ENCODE measurements at regions of chr17 and their contacts with region 1.

Region 1: GRCh38 chr17:2336215-2336851 is at the start of gene TSR1:
- DNase-seq: peak; percentile 90
- ATAC-seq: peak; percentile 81
- H3K4me3 ChIP-seq: peak within 1 kb of the TSS; percentile 77 to 87 (median 82)
- H3K4me3 Mint-ChIP-seq: peak within 1 kb of the TSS; percentile 100
- H3K27ac ChIP-seq: peak within 1 kb of the TSS in 1 of 2 donors; percentile 64
- H3K27ac Mint-ChIP-seq: peak within 1 kb of the TSS; percentile 95
- H3K4me1 ChIP-seq: peaks cover 9 to 25% of the 10 kb centered on the region in 2 donors
- H3K4me1 Mint-ChIP-seq: peaks cover 24% of the 10 kb centered on the region
- H3K27me3 ChIP-seq: no peaks in the 10 kb centered on the region
- H3K27me3 Mint-ChIP-seq: no peaks in the 10 kb centered on the region
- CTCF ChIP-seq: no peak
- total RNA-seq, gene TSR1: 29.8 and 31.5 TPM in 2 replicates

Region 2: GRCh38 chr17:2303204-2304188 is 32.8 kb before region 1 on chr17 and contains the starts of genes SMG6 and SRR:
- CTCF ChIA-PET with region 1: interaction called, 4 read pairs
- POLR2A ChIA-PET with region 1: no interaction called
- intact Hi-C with region 1: loop called (anchors 1 kb)
- DNase-seq: peak; percentile 96
- ATAC-seq: peak; percentile 89
- H3K4me3 ChIP-seq: peak within 1 kb of the TSS; percentile 78 to 98 (median 95)
- H3K4me3 Mint-ChIP-seq: peak within 1 kb of the TSS; percentile 91
- H3K27ac ChIP-seq: peak within 1 kb of the TSS; percentile 49 to 85
- H3K27ac Mint-ChIP-seq: peak within 1 kb of the TSS; percentile 85
- H3K4me1 ChIP-seq: peaks cover 6 to 19% of the 10 kb centered on the region in 2 donors
- H3K4me1 Mint-ChIP-seq: peaks cover 11% of the 10 kb centered on the region
- H3K27me3 ChIP-seq: no peaks in the 10 kb centered on the region
- H3K27me3 Mint-ChIP-seq: no peaks in the 10 kb centered on the region
- CTCF ChIP-seq: no peak
- total RNA-seq, gene SMG6: 35.5 and 41.8 TPM in 2 replicates
- total RNA-seq, gene SRR: 5.1 and 10.1 TPM in 2 replicates

Region 3: DNA sequence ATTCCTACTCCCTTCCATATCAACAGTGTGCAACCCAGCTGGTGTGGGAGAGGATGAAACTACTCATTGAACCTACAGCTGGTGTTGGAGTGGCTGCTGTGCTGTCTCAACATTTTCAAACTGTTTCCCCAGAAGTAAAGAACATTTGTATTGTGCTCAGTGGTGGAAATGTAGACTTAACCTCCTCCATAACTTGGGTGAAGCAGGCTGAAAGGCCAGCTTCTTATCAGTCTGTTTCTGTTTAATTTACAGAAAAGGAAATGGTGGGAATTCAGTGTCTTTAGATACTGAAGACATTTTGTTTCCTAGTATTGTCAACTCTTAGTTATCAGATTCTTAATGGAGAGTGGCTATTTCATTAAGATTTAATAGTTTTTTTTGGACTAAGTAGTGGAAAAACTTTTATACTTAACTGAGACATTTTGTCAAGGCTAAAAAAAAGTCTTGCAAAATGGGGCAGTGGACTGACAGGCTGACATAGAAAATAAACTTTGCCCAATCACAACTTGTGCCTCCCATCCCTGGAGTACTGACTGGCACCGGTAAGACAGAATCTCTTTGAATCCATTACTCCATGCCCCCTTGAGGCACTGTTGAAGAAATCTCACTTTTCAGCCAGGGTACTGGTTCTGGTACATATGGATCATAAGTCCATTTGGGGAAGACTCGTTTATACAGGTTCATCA is 12.6 kb before region 1 on chr17:
- CTCF ChIA-PET with region 1: no interaction called
- POLR2A ChIA-PET with region 1: interaction called, 14 read pairs
- intact Hi-C with region 1: no loop called
- DNase-seq: no peak
- ATAC-seq: no peak
- H3K4me3 ChIP-seq: no peak overlapping the region
- H3K4me3 Mint-ChIP-seq: no peak overlapping the region
- H3K27ac ChIP-seq: no peak overlapping the region
- H3K27ac Mint-ChIP-seq: no peak overlapping the region
- H3K4me1 ChIP-seq: no peaks in the 10 kb centered on the region
- H3K4me1 Mint-ChIP-seq: no peaks in the 10 kb centered on the region
- H3K27me3 ChIP-seq: no peaks in the 10 kb centered on the region
- H3K27me3 Mint-ChIP-seq: no peaks in the 10 kb centered on the region
- CTCF ChIP-seq: no peak

Region 4: GRCh38 chr17:2376107-2376506 is 39.8 kb after region 1 on chr17:
- CTCF ChIA-PET with region 1: no interaction called
- POLR2A ChIA-PET with region 1: no interaction called
- intact Hi-C with region 1: no loop called
- DNase-seq: no peak
- ATAC-seq: no peak
- H3K4me3 ChIP-seq: no peak overlapping the region
- H3K4me3 Mint-ChIP-seq: no peak overlapping the region
- H3K27ac ChIP-seq: no peak overlapping the region
- H3K27ac Mint-ChIP-seq: no peak overlapping the region
- H3K4me1 ChIP-seq: no peaks in the 10 kb centered on the region
- H3K4me1 Mint-ChIP-seq: no peaks in the 10 kb centered on the region
- H3K27me3 ChIP-seq: no peaks in the 10 kb centered on the region
- H3K27me3 Mint-ChIP-seq: no peaks in the 10 kb centered on the region
- CTCF ChIP-seq: no peak

Region 5: DNA sequence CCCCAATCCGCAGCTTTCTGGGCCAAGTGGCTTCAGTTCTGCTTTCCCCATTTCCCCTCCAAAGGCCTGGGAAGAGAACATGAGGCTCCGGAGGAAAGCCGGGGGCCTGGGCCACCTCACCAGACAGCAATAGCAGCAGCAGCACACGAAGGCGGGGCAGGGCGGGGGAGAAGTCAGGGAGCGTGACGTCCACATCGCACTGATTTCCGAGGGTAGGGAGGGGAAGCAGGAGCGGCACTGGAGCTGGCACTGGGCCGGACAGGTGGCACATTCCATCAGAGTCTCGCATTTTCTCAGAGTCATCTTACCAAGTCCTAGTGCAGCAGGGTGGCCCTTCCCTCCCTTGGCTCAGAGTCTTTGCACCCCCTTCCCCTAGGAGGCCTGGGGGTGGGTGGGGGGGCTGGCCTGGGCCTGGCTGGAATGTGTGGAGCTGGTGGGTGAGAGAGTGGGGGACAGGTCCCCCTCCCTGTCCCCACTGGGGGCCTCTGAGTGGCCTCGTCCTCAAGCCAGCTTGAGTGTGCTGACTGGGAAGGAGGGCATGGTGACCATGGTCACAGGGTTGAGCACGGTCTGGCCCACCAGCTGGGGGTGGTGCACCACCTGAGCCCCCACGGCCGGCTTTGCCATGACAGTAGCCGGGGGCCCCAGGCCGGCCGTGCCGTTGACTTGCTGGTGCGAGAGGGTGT is 50.2 kb after region 1 on chr17:
- CTCF ChIA-PET with region 1: interaction called, 11 read pairs
- POLR2A ChIA-PET with region 1: no interaction called
- intact Hi-C with region 1: no loop called
- DNase-seq: no peak
- ATAC-seq: no peak
- H3K4me3 ChIP-seq: no peak overlapping the region
- H3K4me3 Mint-ChIP-seq: no peak overlapping the region
- H3K27ac ChIP-seq: no peak overlapping the region
- H3K27ac Mint-ChIP-seq: no peak overlapping the region
- H3K4me1 ChIP-seq: peaks cover 14 to 21% of the 10 kb centered on the region in 2 donors
- H3K4me1 Mint-ChIP-seq: peaks cover 18% of the 10 kb centered on the region
- H3K27me3 ChIP-seq: no peaks in the 10 kb centered on the region
- H3K27me3 Mint-ChIP-seq: no peaks in the 10 kb centered on the region
- CTCF ChIP-seq: no peak

Region 6: DNA sequence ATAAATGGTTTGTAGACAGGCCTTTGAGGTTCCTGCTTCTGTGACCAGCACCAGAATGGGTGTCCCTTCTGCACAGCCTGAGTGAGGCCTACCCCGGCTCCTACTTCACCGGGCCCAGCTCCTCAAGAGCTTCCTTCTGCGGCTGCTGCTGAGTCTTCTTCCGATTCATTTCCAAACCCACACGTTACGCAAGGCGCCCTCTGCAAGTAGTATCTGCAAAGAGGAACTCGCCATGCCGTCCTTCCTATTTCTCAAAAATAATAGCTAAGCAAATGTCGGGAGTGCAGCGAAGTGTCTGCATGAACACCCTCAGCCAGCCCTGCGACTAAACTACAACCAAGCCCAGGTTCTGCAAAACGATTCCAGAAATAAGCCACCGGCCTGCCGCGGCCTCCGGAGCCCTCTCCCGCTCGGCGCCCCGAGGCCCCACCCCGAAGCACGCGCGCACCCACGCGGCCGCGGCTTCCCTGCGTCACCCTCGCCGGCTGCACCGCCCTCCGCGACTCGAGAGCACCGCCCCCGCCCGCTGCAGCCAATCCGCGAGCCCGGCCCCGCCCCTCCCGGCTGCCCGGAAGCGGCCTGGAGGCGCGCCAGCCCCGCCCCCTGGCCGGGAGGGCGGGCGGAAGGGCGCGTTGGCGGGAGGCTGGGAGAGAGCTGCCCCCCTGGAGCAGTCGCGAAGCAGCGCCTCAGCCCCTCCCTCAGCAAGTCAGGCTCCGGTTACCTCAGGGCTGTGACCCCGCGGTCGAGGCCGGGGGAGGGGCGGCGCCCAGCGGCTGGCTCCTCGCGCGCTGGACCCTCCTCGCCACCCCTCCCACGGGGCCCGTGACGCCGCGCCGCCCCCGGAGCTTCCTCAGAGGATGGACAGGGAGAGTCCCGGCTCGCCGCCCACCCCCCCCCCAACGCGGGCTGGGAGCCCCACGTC is 56.2 kb after region 1 on chr17:
- CTCF ChIA-PET with region 1: interaction called, 3 read pairs
- POLR2A ChIA-PET with region 1: interaction called, 6 read pairs
- intact Hi-C with region 1: loop called (anchors 2 kb)
- DNase-seq: peak; percentile 98
- ATAC-seq: peak; percentile 70
- H3K4me3 ChIP-seq: peak overlapping the region; percentile 35 to 98 (median 85)
- H3K4me3 Mint-ChIP-seq: peak overlapping the region; percentile 97
- H3K27ac ChIP-seq: peak overlapping the region; percentile 97 to 99
- H3K27ac Mint-ChIP-seq: peak overlapping the region; percentile 96
- H3K4me1 ChIP-seq: peaks cover 44 to 58% of the 10 kb centered on the region in 2 donors
- H3K4me1 Mint-ChIP-seq: peaks cover 58% of the 10 kb centered on the region
- H3K27me3 ChIP-seq: no peaks in the 10 kb centered on the region
- H3K27me3 Mint-ChIP-seq: no peaks in the 10 kb centered on the region
- CTCF ChIP-seq: no peak

Region 7: DNA sequence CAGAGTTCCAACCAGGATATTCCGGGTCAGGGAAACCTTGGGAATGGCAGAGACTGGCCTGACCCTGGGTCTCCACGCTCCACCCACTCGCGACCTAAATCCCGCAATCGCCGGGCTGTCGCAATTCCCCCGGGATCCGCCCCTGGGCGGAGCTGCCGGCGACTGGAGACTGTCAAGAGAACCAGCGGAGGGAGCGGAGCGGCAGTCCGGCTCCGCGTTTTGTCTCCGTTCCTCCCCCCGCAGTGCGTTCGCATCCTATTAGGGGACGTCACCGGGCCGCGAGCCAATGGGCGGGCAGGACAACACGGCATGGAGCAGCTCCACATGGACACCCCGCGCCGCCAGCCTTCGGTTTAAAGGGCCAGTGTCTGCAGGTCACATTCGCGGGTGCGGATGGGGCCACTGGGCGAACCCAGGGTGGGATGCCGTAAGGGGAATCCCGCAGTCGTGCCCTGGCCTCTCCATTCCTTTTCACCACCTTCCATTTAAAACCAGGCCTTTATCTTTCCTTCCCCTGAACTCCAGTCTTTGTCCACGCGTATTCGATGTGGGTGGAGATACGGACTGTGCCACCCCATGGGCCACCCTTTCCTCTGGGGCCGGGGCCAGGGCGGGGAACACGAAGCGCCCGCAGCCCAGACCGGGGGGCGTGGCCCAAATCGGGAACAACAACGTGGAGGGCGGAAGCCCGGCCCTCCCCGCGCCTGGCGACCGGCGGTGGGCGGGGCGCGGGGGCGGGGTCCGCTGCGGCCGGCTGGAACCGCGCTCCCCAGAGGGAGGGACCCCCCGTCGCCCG is 65.3 kb after region 1 on chr17:
- CTCF ChIA-PET with region 1: no interaction called
- POLR2A ChIA-PET with region 1: interaction called, 3 read pairs
- intact Hi-C with region 1: loop called (anchors 1 kb)
- DNase-seq: peak; percentile 96
- ATAC-seq: peak; percentile 57
- H3K4me3 ChIP-seq: peak overlapping the region; percentile 64 to 99 (median 94)
- H3K4me3 Mint-ChIP-seq: peak overlapping the region; percentile 99
- H3K27ac ChIP-seq: peak overlapping the region; percentile 95 to 98
- H3K27ac Mint-ChIP-seq: peak overlapping the region; percentile 99
- H3K4me1 ChIP-seq: peaks cover 32 to 36% of the 10 kb centered on the region in 2 donors
- H3K4me1 Mint-ChIP-seq: peaks cover 38% of the 10 kb centered on the region
- H3K27me3 ChIP-seq: no peaks in the 10 kb centered on the region
- H3K27me3 Mint-ChIP-seq: no peaks in the 10 kb centered on the region
- CTCF ChIP-seq: no peak

Region 8: GRCh38 chr17:2711601-2712299 is 375.4 kb after region 1 on chr17 and contains the start of gene CLUH:
- CTCF ChIA-PET with region 1: no interaction called
- POLR2A ChIA-PET with region 1: no interaction called
- intact Hi-C with region 1: loop called (anchors 5 kb)
- DNase-seq: peak; percentile 98
- ATAC-seq: peak; percentile 88
- H3K4me3 ChIP-seq: peak within 1 kb of the TSS; percentile 22 to 95 (median 58)
- H3K4me3 Mint-ChIP-seq: peak within 1 kb of the TSS; percentile 93
- H3K27ac ChIP-seq: peak within 1 kb of the TSS; percentile 46 to 69
- H3K27ac Mint-ChIP-seq: peak within 1 kb of the TSS; percentile 90
- H3K4me1 ChIP-seq: peaks cover 29 to 50% of the 10 kb centered on the region in 2 donors
- H3K4me1 Mint-ChIP-seq: peaks cover 39% of the 10 kb centered on the region
- H3K27me3 ChIP-seq: no peaks in the 10 kb centered on the region
- H3K27me3 Mint-ChIP-seq: no peaks in the 10 kb centered on the region
- CTCF ChIP-seq: no peak
- total RNA-seq, gene CLUH: 53.1 and 78.8 TPM in 2 replicates

Measured in B cell (primary cell).